Right cardiac atrium (tissue), 5 donors: ENCODE measurements at regions of chr5 and their contacts with region 1.

Region 1: DNA sequence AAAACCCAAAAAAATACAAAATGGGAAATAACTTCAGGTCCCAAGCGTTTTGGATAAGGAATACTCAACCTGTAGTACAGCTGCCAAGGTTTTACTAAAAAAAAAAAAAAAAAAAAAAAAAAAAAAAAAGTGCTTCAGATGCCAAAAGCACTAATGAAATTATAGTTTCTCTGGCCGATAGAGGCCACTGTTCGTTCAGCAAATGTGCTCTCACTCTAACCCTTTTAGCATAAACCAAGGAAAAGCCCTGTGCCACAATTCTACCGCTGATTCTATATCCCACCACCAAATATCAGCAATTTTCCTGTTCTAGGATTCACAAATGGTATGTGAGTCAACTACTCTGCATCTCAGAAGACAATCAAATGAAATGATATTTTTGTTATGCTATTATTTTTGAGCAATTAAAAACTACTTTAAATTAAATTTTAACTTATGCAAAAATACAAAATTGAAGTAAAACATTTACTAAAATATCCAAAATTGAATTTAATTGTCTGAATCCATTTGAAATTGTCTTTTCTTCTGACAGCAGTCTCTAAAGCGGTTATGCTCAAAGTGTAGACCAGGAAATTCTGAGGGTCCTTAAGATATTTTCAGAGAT is 79.8 kb downstream of the RICTOR start:
- DNase-seq: no peak
- ATAC-seq: peak; percentile 68 to 80
- H3K4me3 ChIP-seq: no peak overlapping the region
- H3K27ac ChIP-seq: no peak overlapping the region
- H3K4me1 ChIP-seq: no peaks in the 10 kb centered on the region
- H3K27me3 ChIP-seq: no peaks in the 10 kb centered on the region

Region 2: GRCh38 chr5:39074016-39074886 is 79.8 kb after region 1 on chr5 and contains the start of gene RICTOR:
- intact Hi-C with region 1: loop called in 2 of 4 experiments (anchors 5 to 10 kb)
- DNase-seq: peak; percentile 92 to 97 (median 97)
- ATAC-seq: peak; percentile 97 to 98
- H3K4me3 ChIP-seq: peak within 1 kb of the TSS; percentile 81
- H3K27ac ChIP-seq: peak within 1 kb of the TSS; percentile 92
- H3K4me1 ChIP-seq: no peaks in the 10 kb centered on the region
- H3K27me3 ChIP-seq: no peaks in the 10 kb centered on the region
- total RNA-seq, gene RICTOR: 27.6 to 43.1 (median 30.7) TPM

Region 3: DNA sequence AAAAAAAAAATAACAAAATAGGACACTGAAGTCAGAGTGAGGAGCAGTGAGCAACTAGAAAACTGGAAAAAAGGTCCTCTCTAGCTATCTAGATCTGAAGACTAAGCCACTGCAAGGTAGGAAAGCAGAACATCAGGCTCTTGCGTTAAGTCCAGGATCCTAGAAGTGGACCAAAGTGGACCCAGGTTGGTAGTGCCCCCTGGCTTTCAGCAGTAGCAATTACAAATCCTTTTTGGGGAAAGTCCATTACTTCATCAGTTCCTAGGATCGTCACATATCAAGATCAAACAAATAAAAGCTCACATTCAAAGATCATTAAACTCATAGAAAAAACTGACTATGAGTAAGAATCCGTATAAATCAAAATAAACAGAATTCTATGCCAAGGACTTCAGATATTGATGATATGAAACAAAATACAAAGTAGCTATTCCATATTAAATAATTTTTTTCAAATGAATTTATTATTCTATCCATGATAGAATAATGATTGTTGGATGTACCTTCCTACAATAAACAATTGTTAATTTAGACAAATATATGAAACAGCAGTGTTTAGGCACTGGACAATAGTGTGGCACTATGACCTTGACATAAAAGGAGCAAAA is 86.3 kb after region 1 on chr5:
- intact Hi-C with region 1: loop called in 3 of 4 experiments (anchors 2 to 10 kb)
- DNase-seq: peak in 1 of 3 donors; percentile 37
- ATAC-seq: peak; percentile 72 to 83
- H3K4me3 ChIP-seq: no peak overlapping the region
- H3K27ac ChIP-seq: no peak overlapping the region
- H3K4me1 ChIP-seq: no peaks in the 10 kb centered on the region
- H3K27me3 ChIP-seq: no peaks in the 10 kb centered on the region

Region 4: DNA sequence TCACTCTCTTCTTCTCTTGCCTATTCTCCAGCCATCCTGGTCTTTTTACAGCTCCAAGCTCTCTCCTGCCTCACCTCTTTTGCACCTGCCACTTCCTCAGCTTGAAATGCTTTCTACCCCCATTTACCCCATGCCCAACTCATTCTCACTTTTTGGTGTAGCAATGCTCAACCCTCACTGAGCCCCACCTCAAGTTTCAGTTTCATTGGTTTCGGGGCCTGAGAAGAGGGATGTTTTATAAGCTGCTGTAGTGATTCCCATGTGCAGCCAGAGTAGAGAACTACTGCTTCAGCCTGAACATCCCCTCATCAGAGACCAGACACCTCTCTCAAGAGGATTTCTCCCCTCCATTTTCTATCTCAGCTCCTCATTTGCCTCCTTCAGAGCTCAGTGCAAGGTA is 270.1 kb after region 1 on chr5:
- intact Hi-C with region 1: no loop called
- DNase-seq: no peak
- ATAC-seq: no peak
- H3K4me3 ChIP-seq: no peak overlapping the region
- H3K27ac ChIP-seq: no peak overlapping the region
- H3K4me1 ChIP-seq: no peaks in the 10 kb centered on the region
- H3K27me3 ChIP-seq: no peaks in the 10 kb centered on the region

Region 5: DNA sequence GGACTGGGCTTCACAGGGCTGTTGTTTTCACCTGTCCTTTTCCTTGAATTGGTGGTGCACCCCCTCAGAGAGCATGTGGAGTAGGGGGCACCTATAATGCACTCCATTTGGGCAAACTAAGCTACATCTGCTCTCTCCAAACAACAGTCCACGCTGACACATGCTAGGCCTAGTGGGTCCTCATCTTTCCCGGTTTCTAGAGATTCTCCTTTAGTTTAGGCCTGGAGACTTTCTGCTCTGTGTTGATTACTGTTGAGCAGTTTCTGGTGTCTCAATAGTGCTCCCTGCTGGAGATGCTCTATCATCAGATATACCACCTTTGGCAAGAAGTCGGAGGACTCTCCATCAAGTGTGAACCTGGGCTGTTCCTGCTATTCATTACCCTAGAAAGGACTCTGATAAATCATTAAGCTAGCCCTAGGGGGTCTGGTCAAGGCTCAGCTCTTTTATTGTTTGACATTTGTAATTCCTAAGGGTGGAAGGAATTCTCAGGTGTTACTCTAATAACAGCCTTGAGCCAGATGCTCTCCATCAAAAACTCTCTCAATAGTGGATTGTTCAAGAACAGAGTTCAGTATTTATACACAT is 288.9 kb after region 1 on chr5:
- intact Hi-C with region 1: loop called in 1 of 4 experiments (anchors 10 kb)
- DNase-seq: no peak
- ATAC-seq: peak; percentile 71 to 80
- H3K4me3 ChIP-seq: no peak overlapping the region
- H3K27ac ChIP-seq: no peak overlapping the region
- H3K4me1 ChIP-seq: no peaks in the 10 kb centered on the region
- H3K27me3 ChIP-seq: no peaks in the 10 kb centered on the region